K562 (cell line): ENCODE measurements at regions of chr2 and their contacts with region 1.

Region 1: DNA sequence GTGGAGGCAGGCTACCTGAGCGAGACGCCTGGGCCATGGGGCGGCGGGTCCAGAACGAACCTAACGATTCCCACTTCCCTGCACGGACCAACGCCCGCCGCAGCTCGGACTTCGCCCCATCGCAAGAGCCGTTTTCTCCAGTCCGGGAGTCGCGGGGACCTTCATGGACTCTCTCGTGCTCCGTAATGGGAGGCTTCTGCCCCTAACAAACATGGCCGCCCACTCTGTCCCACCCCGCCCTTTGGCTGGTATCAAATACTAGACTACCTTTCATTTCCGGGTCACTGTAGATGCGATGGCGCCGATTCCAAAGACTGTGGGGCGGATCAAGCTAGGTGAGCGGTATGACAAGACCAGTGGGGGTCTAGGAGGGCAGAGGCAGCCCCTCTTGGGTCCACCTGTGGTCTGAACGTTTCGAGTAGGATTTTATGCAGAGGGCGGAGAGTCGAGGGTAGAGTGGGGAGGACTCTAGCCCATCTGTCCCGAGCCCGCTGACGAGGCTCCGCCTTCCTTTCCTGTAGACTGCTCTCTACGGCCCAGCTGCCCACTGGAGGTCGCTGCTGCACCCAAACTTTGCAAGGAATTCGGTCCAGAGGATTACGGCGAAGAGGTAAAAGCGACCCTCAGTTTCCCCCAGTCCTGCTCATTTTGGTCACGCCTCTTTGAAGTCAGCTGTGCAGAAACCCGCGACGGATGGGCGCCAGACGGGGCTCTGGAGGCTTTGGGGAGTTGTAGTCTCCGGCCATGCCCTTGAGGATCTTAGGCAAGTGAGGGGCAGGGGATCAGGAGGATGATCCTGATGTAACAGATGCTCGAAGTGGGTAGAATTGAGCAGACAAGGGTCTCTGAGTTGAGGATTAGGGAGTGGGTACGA is at the starts of genes CCDC142 and TTC31:
- DNase-seq: peak; percentile 90 to 96 (median 91)
- ATAC-seq: peak; percentile 95
- H3K4me3 ChIP-seq: peak within 1 kb of the TSS; percentile 86
- H3K27ac ChIP-seq: peak within 1 kb of the TSS; percentile 92
- H3K4me1 ChIP-seq: peaks cover 8 to 23% of the 10 kb centered on the region in 2 experiments; a peak in 4 of 5 replicates
- H3K27me3 ChIP-seq: no peaks in the 10 kb centered on the region
- CTCF ChIP-seq: peak; percentile 86 to 95 (median 92)
- EP300 ChIP-seq: 0 out of 2 replicates have a peak, but pooled peaks have one; percentile 1
- POLR2A ChIP-seq: peak; percentile 91
- RAD21 ChIP-seq: peak; percentile 88 to 89
- polyA plus RNA-seq, gene CCDC142: 0.55 to 0.58 TPM
- polyA plus RNA-seq, gene TTC31: 4.7 to 5.0 TPM

Region 2: DNA sequence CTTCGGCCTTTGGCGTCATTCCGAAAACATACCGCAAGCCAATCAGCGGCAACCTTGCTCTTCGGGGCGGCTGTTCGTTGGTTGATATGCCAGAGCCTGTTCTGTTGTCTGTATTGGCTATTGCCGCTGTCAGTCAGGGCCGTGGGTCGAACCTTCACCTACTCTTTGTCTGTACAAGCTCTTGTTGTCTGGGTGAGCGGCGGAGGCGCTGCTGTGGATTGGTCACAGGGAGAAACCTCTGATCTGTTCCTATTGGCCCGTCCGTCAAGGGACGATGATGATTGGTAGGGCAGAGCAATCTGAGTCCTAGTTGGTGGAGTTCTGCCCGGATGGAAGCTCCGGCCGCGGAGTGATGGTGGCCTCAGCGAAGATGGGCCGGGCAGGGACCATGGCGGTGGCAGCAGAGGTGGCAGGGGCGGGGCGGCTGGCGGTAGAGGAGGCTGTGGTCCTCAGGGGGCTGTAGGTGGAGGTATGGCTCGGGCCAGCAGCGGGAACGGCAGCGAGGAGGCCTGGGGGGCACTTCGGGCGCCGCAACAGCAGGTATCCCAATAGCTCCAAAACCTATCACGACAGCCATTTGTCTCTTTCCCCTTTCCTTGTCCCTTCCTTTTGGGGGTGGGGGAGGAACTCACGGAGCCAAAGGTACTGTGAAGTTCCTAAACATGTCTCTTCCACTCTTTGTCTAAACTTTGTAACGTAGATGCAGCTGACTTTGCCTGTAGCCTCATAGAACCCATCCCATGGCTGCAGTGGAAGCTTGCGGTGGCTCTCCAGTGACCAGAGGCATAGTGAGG is 24.7 kb before region 1 on chr2 and contains the start of gene WBP1:
- CTCF ChIA-PET with region 1: interaction called, 3 read pairs
- POLR2A ChIA-PET with region 1: interaction called, 7 read pairs
- in situ Hi-C with region 1: no loop called
- intact Hi-C with region 1: loop called (anchors 2 kb)
- DNase-seq: peak; percentile 80 to 98 (median 88)
- ATAC-seq: peak; percentile 90
- H3K4me3 ChIP-seq: peak within 1 kb of the TSS; percentile 53
- H3K27ac ChIP-seq: peak within 1 kb of the TSS; percentile 31; the same call in 1 of the 3 replicates
- H3K4me1 ChIP-seq: peaks cover 7 to 33% of the 10 kb centered on the region in 2 experiments
- H3K27me3 ChIP-seq: no peaks in the 10 kb centered on the region
- CTCF ChIP-seq: no peak
- EP300 ChIP-seq: no peak
- POLR2A ChIP-seq: peak; percentile 66
- RAD21 ChIP-seq: no peak
- polyA plus RNA-seq, gene WBP1: 1.9 to 2.1 TPM

Region 3: DNA sequence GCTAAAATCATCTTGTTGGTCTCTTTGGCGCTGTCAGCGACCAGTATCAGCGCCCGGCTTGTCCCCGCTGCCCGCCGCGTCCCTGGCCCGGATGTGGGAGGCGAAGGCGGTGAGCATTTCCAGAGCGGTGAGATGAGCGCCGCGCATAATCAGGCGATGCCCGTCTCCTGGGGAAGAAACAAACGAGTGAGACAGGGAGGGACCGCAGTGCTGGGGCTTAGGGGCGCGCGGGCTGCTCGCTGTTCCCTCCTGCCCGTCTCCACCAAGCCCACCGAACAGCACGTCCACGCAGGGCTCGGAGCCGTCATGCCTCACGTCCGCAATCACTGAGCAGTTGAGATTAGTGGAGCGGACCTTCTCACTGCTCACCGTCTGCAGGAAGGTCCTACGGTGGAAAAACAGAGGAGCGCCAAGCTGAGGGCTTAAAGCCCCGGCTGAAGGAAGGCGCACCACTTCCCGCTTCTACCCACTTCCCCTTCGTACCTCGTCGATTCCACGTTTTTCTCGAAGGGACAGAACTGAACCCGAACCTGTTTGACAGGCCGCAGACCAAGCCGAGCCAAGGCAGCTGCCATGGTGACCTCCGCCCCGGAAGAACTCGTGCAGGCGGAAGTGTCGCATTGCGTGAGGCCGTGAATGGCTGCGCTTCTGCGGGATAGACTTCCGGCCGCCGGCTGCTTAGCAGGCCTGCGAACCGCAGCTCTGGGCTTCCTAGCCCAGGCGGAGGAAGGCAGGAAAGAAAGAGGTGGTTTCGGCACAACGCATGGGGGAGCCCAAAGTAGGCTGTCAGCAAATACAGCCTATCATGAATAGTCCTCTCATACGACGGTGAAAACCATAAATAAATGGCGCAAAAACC is 10.7 kb before region 1 on chr2 and contains the start of gene MRPL53:
- CTCF ChIA-PET with region 1: no interaction called
- POLR2A ChIA-PET with region 1: interaction called, 28 read pairs
- in situ Hi-C with region 1: no loop called
- intact Hi-C with region 1: no loop called
- DNase-seq: peak; percentile 80 to 97 (median 80)
- ATAC-seq: peak; percentile 93
- H3K4me3 ChIP-seq: peak within 1 kb of the TSS; percentile 83
- H3K27ac ChIP-seq: peak within 1 kb of the TSS; percentile 95
- H3K4me1 ChIP-seq: peaks cover 12 to 16% of the 10 kb centered on the region in 2 experiments; a peak in 3 of 5 replicates
- H3K27me3 ChIP-seq: no peaks in the 10 kb centered on the region
- CTCF ChIP-seq: peak in 1 of 3 experiments; percentile 11; a peak in 2 of 6 replicates
- EP300 ChIP-seq: peak; percentile 33; the same call in 1 of the 2 replicates
- POLR2A ChIP-seq: peak; percentile 95
- RAD21 ChIP-seq: peak in 1 of 2 experiments; percentile 30; a peak in 1 of 4 replicates
- polyA plus RNA-seq, gene MRPL53: 24.3 to 41.1 TPM

Region 4: GRCh38 chr2:74507145-74507925 is 24.3 kb after region 1 on chr2 and contains the start of gene PCGF1:
- CTCF ChIA-PET with region 1: no interaction called
- POLR2A ChIA-PET with region 1: interaction called, 7 read pairs
- in situ Hi-C with region 1: no loop called
- intact Hi-C with region 1: loop called (anchors 1 kb)
- DNase-seq: peak; percentile 95 to 99 (median 96)
- ATAC-seq: peak; percentile 80
- H3K4me3 ChIP-seq: peak within 1 kb of the TSS; percentile 78
- H3K27ac ChIP-seq: peak within 1 kb of the TSS; percentile 97
- H3K4me1 ChIP-seq: peaks cover 36 to 55% of the 10 kb centered on the region in 2 experiments; a peak in 4 of 5 replicates
- H3K27me3 ChIP-seq: no peaks in the 10 kb centered on the region
- CTCF ChIP-seq: peak; percentile 42 to 57 (median 54); a peak in 5 of 6 replicates
- EP300 ChIP-seq: peak; percentile 17; the same call in 1 of the 2 replicates
- POLR2A ChIP-seq: peak; percentile 86
- RAD21 ChIP-seq: peak; percentile 15 to 30; a peak in 3 of 4 replicates
- polyA plus RNA-seq, gene PCGF1: 45.3 to 45.7 TPM

Region 5: DNA sequence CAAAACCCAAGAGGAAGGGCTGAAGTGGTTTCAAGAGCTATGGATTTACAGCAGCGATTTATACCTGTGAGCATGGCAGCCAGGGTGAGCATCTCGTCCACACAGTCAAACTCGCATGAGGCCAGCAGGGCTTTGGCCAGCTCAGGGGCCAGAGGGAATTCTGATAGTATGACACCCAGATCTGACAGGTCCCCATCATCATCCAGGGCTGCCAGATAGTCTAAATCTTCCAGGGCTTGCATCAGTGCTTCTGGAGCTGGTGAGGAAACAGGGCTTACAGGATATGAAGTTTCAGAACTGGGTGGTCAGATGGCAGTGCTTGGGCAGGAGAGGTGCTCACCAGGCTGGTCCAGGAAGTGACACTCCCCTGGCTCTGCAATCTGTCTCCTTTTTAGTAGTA is 39.5 kb after region 1 on chr2:
- CTCF ChIA-PET with region 1: no interaction called
- POLR2A ChIA-PET with region 1: no interaction called
- in situ Hi-C with region 1: no loop called
- intact Hi-C with region 1: no loop called
- DNase-seq: no peak
- ATAC-seq: no peak
- H3K4me3 ChIP-seq: no peak overlapping the region
- H3K27ac ChIP-seq: no peak overlapping the region
- H3K4me1 ChIP-seq: no peaks in the 10 kb centered on the region; a peak in 1 of 5 replicates
- H3K27me3 ChIP-seq: no peaks in the 10 kb centered on the region
- CTCF ChIP-seq: no peak
- EP300 ChIP-seq: no peak
- POLR2A ChIP-seq: no peak
- RAD21 ChIP-seq: no peak

Region 6: GRCh38 chr2:74991977-74992376 is 508.9 kb after region 1 on chr2:
- CTCF ChIA-PET with region 1: no interaction called
- POLR2A ChIA-PET with region 1: no interaction called
- in situ Hi-C with region 1: no loop called
- intact Hi-C with region 1: no loop called
- DNase-seq: peak in 1 of 4 experiments; percentile 8
- ATAC-seq: peak; percentile 75
- H3K4me3 ChIP-seq: no peak overlapping the region
- H3K27ac ChIP-seq: no peak overlapping the region
- H3K4me1 ChIP-seq: no peaks in the 10 kb centered on the region; a peak in 2 of 5 replicates
- H3K27me3 ChIP-seq: no peaks in the 10 kb centered on the region; a peak in 1 of 5 replicates
- CTCF ChIP-seq: no peak
- EP300 ChIP-seq: no peak
- POLR2A ChIP-seq: no peak
- RAD21 ChIP-seq: no peak